Mammary epithelial cell (primary cell): ENCODE measurements at regions of chr14 and their contacts with region 1.

Region 1: DNA sequence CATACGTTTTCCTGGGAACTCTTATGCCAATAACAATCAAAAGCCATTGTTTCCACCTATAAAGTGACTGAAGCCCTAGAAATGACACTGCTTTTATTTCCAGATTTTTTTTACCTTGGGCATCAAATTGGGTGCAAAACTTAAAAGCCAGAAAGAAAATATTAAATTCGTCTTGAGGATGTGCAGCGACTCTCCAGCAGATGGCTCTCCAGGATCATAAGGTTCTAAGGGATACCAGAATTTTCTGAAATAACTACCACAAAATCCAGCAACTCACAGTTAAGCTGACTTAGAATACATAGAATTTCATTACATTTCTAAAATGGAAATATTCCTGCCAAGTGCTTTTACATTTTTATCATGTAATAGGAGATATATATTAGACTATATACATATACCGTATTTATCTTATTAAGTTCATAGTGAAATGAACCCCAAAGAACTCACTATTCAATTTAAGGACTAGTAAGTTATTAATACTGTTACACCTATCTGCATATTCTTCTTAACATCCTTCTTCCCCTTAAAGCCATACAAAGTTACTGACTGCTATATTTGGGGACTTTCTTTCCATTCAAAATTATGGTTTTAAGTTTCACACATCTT is 44.0 kb downstream of the ARMH4 start:
- DNase-seq: peak; percentile 32
- H3K4me3 ChIP-seq: no peak overlapping the region
- H3K27ac ChIP-seq: no peak overlapping the region
- H3K4me1 ChIP-seq: no peaks in the 10 kb centered on the region
- H3K27me3 ChIP-seq: no peaks in the 10 kb centered on the region
- CTCF ChIP-seq: peak; percentile 75 to 81

Region 2: DNA sequence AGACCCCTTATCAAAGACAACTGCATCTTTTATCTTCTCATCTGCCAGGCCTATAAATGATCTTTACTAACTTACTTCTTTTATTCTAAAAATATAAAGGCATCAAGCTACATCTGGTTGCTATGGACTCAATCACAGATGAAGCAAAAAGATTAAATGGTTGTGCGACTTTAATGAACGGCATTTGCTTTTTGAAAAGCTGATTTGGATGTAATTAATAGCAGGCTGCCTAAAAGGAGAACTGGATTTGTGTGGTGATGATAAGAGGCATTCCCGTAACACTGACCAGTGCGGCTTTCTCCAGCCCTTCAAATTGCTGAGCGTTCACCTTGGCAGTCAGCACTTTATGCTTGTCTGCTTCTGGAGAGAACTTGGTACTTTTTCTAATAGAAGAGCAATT is 59.8 kb before region 1 on chr14:
- CTCF ChIA-PET with region 1: no interaction called
- dilution Hi-C with region 1: no loop called
- in situ Hi-C with region 1: no loop called
- intact Hi-C with region 1: no loop called
- DNase-seq: no peak
- H3K4me3 ChIP-seq: no peak overlapping the region
- H3K27ac ChIP-seq: no peak overlapping the region
- H3K4me1 ChIP-seq: no peaks in the 10 kb centered on the region
- H3K27me3 ChIP-seq: peaks cover 2% of the 10 kb centered on the region
- CTCF ChIP-seq: no peak

Region 3: GRCh38 chr14:58199726-58200479 is 91.9 kb after region 1 on chr14 and contains the start of gene ACTR10:
- CTCF ChIA-PET with region 1: no interaction called
- dilution Hi-C with region 1: no loop called
- in situ Hi-C with region 1: no loop called
- intact Hi-C with region 1: loop called (anchors 1 kb)
- DNase-seq: peak; percentile 85
- H3K4me3 ChIP-seq: peak within 1 kb of the TSS; percentile 85 to 97 (median 90)
- H3K27ac ChIP-seq: peak within 1 kb of the TSS; percentile 58
- H3K4me1 ChIP-seq: peaks cover 9% of the 10 kb centered on the region
- H3K27me3 ChIP-seq: no peaks in the 10 kb centered on the region
- CTCF ChIP-seq: no peak
- total RNA-seq, gene ACTR10: 62.5 to 67.9 TPM

Region 4: DNA sequence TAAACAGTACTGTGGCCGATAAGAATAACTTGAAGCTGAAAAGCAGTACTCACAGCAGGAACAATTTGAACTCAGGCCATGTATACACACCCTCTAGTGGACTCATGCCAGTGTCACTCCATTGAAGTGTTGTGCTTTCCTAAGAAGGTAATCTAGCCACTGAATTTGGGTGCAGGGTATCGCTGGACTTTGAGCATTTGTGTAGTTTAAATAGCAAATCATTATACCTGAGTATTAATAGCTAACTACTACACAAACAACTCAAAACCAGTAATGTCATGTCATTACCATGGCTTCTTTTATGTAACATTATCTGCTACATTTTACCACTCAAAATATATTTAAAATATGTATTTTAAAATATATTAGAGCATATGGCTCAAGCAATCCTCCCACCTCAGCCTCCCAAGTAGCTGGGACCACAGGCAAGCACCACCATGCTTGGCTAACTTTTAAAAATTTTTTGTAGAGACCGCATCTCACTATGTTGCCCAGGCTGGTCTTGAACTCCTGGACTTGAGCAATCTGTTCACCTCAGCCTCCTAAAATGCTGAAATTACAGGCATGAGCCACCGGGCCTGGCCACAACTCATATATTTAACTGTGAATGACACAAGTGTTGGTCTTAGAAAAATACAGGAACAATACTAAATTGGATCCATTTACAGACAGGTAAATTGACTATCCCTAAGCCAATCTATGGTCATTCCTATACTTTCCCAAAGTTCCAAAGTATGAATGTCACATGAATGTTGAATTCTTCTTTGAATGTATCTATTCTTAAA is 164.7 kb after region 1 on chr14:
- CTCF ChIA-PET with region 1: no interaction called
- dilution Hi-C with region 1: no loop called
- in situ Hi-C with region 1: loop called in 1 of 2 experiments (anchors 25 kb)
- intact Hi-C with region 1: no loop called
- DNase-seq: no peak
- H3K4me3 ChIP-seq: no peak overlapping the region
- H3K27ac ChIP-seq: no peak overlapping the region
- H3K4me1 ChIP-seq: no peaks in the 10 kb centered on the region
- H3K27me3 ChIP-seq: no peaks in the 10 kb centered on the region
- CTCF ChIP-seq: peak in 1 of 2 donors; percentile 32

Region 5: DNA sequence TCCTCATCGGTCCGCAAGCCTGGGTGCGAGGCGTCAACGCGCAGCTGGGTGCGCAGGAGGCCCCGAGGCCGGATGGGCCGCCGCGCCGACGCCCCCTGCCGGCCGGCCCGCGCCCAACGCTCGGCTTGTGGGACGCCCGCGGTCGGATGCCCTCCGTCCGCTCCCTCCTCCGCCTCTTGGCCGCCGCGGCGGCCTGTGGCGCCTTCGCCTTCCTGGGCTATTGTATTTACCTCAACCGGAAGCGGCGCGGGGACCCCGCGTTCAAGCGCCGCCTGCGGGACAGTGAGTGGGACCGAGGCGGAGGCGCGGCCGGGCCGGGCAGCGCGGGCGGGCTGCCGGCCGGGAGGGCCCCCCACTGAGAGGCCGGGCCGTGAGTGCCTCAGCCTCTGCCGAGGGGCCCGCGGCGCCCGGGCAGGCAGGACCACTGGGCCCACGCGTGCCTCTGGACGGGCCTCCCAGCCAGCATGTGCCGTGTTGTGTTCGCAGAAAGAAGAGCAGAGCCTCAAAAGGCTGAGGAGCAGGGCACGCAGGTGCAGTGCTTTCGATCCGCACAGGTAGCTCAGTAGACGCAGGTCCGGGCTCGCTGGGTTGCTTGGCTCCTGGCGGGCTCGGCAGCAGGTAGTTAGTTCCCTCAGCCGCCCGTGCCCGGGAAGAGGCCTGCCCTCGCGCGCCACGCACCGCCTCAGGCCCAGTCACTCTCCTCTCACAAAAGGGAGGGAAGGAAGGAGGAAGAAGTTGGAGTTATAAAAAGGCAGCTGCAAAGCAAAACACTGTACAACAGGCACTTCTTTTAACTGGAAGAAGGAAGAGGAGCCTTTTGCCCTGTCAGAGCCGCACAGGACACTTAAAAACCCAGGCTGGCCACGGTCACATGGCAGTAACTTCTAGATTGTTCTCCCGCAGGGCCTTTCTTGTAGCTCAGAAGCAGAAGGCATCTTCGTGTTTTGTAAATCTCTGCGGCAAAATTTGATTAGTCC is 288.1 kb after region 1 on chr14 and contains the start of gene TOMM20L:
- CTCF ChIA-PET with region 1: no interaction called
- dilution Hi-C with region 1: no loop called
- in situ Hi-C with region 1: no loop called
- intact Hi-C with region 1: loop called (anchors 1 kb)
- DNase-seq: peak; percentile 47
- H3K4me3 ChIP-seq: peak within 1 kb of the TSS; percentile 38 to 61 (median 54)
- H3K27ac ChIP-seq: no peak within 1 kb of the TSS
- H3K4me1 ChIP-seq: peaks cover 10% of the 10 kb centered on the region
- H3K27me3 ChIP-seq: no peaks in the 10 kb centered on the region
- CTCF ChIP-seq: peak; percentile 50 to 53
- total RNA-seq, gene TOMM20L: not detected